OCI-LY7 (cell line): ENCODE measurements at regions of chr12 and their contacts with region 1.

Region 1: DNA sequence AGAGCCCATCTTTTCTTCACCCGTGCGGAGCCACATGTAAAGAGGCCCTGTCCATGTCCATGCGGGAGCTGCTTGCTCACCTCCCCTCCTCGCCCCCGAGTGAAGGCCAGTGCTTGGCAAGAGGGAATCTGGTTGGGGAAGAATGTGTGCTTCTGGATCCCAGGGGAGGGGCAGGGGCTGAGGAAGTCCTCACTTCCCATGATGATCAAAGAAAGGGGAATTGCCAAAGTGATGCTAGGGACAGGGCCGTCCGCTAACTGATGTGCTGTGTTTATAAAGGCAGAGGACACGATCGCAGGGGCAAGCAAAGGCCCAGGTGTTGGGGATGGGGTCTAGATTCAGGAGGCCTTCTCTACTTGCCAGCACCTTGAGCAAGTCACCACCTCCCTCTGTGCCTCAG is 137.4 kb upstream of the PRMT8 start:
- DNase-seq: no peak
- H3K4me3 ChIP-seq: no peak overlapping the region
- H3K27ac ChIP-seq: no peak overlapping the region
- H3K4me1 ChIP-seq: no peaks in the 10 kb centered on the region
- CTCF ChIP-seq: no peak

Region 2: DNA sequence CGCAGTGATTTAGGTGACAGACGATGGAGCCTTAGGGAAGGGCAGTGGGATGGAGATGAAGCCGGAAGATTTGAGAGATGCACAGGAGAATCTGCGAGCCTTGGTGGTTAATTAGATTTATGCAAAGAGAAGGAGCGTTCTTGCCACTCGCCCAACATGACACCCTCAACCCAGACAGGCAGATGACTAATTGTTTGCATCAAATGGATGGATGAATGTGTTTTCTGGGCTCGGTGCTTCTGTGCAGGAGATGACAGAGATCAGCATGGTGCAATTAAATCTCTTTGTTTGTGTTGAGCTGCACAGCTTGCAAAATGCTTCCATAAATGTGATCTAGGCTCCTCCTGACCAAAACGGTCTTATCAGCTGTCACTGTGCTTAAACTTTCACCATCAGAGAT is 64.9 kb before region 1 on chr12:
- CTCF ChIA-PET with region 1: no interaction called
- POLR2A ChIA-PET with region 1: no interaction called
- intact Hi-C with region 1: no loop called
- DNase-seq: no peak
- H3K4me3 ChIP-seq: no peak overlapping the region
- H3K27ac ChIP-seq: no peak overlapping the region
- H3K4me1 ChIP-seq: no peaks in the 10 kb centered on the region
- CTCF ChIP-seq: no peak

Region 3: DNA sequence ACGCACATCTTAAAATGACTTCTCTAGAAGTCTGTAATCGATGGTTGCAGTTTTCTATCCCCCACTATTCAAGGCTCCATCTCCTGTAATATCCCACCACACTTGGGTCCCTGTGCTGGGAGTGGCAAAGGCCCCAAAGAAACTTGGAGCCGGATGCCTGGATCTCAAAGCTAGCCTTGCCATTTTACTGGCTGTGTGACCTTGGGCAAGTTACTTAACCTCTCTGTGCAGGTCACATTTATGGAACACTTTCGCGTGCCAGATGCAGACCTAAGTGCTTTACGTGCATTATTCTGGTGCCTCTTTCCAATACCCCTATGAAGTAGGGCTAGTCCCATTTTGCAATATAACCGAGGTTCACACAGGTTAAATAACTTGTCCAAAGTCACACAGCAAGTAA is 14.4 kb before region 1 on chr12:
- CTCF ChIA-PET with region 1: no interaction called
- POLR2A ChIA-PET with region 1: interaction called, 10 read pairs
- intact Hi-C with region 1: no loop called
- DNase-seq: no peak
- H3K4me3 ChIP-seq: no peak overlapping the region
- H3K27ac ChIP-seq: no peak overlapping the region
- H3K4me1 ChIP-seq: no peaks in the 10 kb centered on the region
- CTCF ChIP-seq: no peak

Region 4: DNA sequence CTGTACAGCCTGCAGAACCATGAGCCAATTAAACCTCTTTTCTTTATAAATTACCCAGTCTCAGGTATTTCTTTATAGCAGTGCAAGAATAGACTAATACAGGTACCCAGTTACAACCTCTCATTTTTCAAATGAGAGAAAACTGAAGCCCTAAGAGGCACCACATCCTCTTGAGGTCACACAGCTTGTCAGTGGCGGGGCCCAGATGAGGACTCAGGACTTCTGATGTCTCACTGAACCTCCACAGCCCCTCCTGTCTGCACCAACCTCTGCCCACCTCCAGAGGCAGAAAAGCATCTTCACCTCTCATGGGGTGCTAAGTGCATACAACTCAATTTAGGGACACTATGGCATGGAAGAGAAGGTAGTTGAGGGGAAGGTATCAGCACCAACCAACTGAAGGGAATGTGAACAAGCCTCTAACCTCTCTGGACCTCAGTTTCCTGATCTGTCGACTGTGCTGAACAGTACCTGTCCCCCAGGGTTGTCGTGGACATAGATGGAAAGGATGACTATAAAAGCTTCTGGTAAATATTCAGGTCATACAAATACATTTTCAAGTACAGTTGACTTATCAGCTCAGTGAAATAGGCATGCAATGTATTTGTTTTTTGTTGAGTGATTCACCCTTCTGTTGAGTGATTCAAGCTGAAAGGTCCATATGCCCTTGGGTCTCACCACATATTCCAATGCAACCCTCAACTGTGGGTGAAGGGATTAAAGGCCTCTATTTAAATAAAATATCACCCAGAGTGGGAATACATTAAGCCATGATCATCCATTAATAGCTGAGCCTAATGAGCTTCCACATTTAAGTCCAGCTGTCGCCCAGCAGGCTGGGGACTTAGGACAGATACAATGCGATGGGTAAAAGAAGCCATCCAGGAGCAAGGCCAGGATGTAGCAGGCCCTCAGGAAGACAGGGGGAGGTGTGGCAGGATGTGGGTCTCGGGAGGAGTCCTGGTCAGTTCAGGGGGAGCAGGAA is 278.9 kb after region 1 on chr12:
- CTCF ChIA-PET with region 1: no interaction called
- POLR2A ChIA-PET with region 1: no interaction called
- intact Hi-C with region 1: no loop called
- DNase-seq: no peak
- H3K4me3 ChIP-seq: no peak overlapping the region
- H3K27ac ChIP-seq: no peak overlapping the region
- H3K4me1 ChIP-seq: no peaks in the 10 kb centered on the region
- CTCF ChIP-seq: no peak